ENCODE measurements at regions of chr3 and their contacts with region 1.

Region 1: GRCh38 chr3:146550743-146551510 is 6.5 kb upstream of the PLSCR1 start:
- DNase-seq: peak; percentile 71
- H3K4me3 Mint-ChIP-seq: peak overlapping the region; percentile 75
- H3K27ac Mint-ChIP-seq: peak overlapping the region; percentile 52
- H3K4me1 Mint-ChIP-seq: peaks cover 68% of the 10 kb centered on the region
- H3K27me3 Mint-ChIP-seq: peaks cover 1% of the 10 kb centered on the region

Region 2: GRCh38 chr3:146322216-146322817 is 228.6 kb before region 1 on chr3:
- intact Hi-C with region 1: no loop called
- DNase-seq: no peak
- H3K4me3 Mint-ChIP-seq: no peak overlapping the region
- H3K27ac Mint-ChIP-seq: no peak overlapping the region
- H3K4me1 Mint-ChIP-seq: no peaks in the 10 kb centered on the region
- H3K27me3 Mint-ChIP-seq: no peaks in the 10 kb centered on the region

Region 3: GRCh38 chr3:146517684-146518435 is 33.1 kb before region 1 on chr3:
- intact Hi-C with region 1: loop called (anchors 5 kb)
- DNase-seq: no peak
- H3K4me3 Mint-ChIP-seq: no peak overlapping the region
- H3K27ac Mint-ChIP-seq: no peak overlapping the region
- H3K4me1 Mint-ChIP-seq: peaks cover 34% of the 10 kb centered on the region
- H3K27me3 Mint-ChIP-seq: no peaks in the 10 kb centered on the region

Region 4: GRCh38 chr3:146529021-146529420 is 21.9 kb before region 1 on chr3:
- intact Hi-C with region 1: no loop called
- DNase-seq: no peak
- H3K4me3 Mint-ChIP-seq: no peak overlapping the region
- H3K27ac Mint-ChIP-seq: no peak overlapping the region
- H3K4me1 Mint-ChIP-seq: peaks cover 19% of the 10 kb centered on the region
- H3K27me3 Mint-ChIP-seq: no peaks in the 10 kb centered on the region

Measured in activated CD4-positive, alpha-beta T cell treated with anti-CD3 and anti-CD28 coated beads, Interleukin-2, amount 10 ng/mL, durations not matched to agents 24 days and 14 days (primary cell).